ENCODE measurements at regions of chrX and their contacts with region 1.

Region 1: GRCh38 chrX:13742397-13743176 is 8.0 kb downstream of the OFD1 start:
- DNase-seq: no peak
- H3K4me3 ChIP-seq: no peak overlapping the region
- H3K27ac ChIP-seq: peak overlapping the region in 1 of 4 donors; percentile 29
- H3K4me1 ChIP-seq: no peaks in the 10 kb centered on the region
- H3K27me3 ChIP-seq: no peaks in the 10 kb centered on the region
- CTCF ChIP-seq: no peak
- POLR2A ChIP-seq: no peak

Region 2: DNA sequence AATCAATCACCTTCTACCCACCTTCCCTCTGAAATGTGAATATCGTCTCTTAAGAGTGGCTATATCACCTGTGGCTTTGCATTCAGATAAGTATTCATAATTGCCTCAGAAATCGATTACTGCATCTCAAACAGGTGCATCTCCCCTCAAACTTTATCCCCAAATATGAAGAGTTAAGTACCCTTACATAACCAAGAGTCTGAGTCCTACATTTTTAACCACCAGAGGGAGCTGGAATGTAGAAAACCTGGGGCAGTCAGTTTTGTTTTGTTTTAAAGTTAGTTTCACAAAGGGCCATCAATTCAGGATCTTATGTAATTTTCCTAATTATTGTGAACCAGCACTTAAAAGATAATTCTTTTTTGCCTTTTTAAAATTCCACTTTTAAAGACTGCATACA is 84.0 kb before region 1 on chrX:
- intact Hi-C with region 1: loop called (anchors 5 kb)
- DNase-seq: no peak
- H3K4me3 ChIP-seq: no peak overlapping the region
- H3K27ac ChIP-seq: peak overlapping the region in 3 of 4 donors; percentile 7 to 55 (median 11)
- H3K4me1 ChIP-seq: peaks cover 0 to 14% (median 0%) of the 10 kb centered on the region in 3 donors
- H3K27me3 ChIP-seq: no peaks in the 10 kb centered on the region
- CTCF ChIP-seq: peak; percentile 59 to 79 (median 70)
- POLR2A ChIP-seq: no peak

Region 3: DNA sequence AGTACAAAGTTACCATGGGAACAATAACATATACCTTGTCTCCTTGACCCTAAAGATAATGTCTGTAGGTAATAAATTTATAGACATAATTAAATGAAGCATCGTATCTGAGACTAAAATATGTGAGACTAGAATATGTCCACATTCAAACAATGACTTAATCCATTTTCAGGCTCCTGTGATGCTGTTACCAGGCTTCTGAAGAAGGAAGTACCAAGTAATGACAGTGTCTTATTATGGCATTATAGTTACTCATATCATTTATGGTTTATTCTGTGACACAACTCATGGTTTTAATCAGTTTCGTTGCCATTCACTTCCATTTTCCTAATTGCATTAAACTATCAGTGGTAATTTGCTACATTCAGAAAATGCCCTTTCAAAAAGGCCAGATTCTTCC is 174.9 kb after region 1 on chrX:
- intact Hi-C with region 1: no loop called
- DNase-seq: no peak
- H3K4me3 ChIP-seq: no peak overlapping the region
- H3K27ac ChIP-seq: no peak overlapping the region
- H3K4me1 ChIP-seq: no peaks in the 10 kb centered on the region
- H3K27me3 ChIP-seq: no peaks in the 10 kb centered on the region
- CTCF ChIP-seq: no peak
- POLR2A ChIP-seq: no peak